ENCODE measurements at regions of chr3 and their contacts with region 1.

Region 1: DNA sequence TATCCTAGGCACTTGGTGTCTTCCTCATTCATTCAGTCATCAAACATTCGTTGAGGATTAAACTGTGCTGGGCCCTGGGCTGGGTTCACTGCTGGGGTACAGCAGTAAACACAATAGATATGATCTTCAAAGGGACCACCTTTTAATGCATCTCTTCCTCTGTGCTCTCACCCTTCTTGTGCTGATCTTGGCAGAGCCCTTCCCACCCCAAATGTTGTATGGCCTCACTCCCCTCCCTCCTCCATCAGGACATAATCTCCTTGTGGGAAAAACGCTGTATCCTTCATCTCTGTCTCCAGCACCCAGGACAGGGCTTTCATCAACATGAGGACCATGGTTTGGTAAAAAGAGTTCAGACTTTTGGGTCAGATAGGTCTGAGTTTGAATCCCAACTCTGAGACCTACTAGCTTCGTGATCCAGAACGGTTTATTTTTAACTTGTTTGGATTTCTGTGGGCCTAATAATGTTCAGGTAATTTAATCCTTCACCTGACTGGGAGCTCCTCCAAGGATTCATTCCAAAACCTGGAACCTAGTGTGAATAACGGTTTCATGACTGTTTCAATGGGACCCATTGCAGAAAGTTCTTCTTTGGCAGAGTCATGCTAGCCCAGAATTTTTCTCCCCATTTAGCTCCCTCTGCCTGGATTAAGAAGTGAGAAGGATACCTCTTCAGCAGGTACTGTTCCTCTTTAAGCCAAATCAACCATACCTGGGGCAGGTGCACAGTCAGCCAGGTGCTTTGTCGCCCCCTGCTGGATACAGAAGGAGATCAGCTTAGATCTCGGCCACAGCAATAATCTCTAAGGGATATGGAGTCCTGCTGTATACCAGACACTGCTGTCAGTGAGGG is 5.2 kb upstream of the WNT7A start:
- DNase-seq: peak; percentile 54
- H3K4me3 Mint-ChIP-seq: no peak overlapping the region
- H3K27ac Mint-ChIP-seq: no peak overlapping the region
- H3K4me1 Mint-ChIP-seq: no peaks in the 10 kb centered on the region
- H3K27me3 Mint-ChIP-seq: peaks cover 34% of the 10 kb centered on the region

Region 2: DNA sequence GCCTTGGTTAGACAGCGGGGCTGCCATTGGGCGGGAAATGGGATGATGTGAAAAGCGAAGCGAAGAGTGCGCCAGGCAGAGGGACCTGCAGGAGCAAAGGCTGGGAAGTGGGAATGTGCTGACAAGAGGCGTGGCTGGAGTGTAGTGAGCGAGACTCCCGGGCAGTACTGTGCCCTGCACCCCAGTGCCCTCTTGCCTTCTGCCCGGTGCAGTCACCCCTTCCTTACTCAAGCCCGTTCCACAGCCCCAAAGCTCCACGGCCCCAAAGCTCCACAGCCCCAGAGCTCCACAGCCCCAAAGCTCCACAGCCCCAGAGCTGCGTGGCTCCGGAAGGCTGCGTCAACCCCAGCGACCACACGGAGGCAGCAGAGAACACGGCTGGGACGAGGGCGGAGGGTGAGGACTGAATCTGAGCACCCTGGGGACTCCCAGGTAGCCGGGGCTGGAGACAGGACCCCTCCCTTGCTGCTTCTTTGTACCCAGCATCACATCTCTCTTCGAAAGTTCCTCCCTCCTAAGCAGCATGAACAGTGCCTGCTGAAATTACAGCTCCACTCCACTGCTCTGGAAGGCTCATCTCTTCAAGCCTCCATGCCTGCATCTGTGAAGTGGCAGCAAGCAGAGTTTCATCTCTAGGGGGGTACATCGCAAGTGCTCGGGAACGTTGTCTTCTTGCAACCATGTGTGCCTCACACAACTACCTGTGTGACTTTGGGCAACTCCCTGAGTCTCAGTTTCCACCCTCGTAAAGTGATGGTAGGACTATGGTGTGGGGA is 227.2 kb before region 1 on chr3:
- intact Hi-C with region 1: loop called (anchors 1 kb)
- DNase-seq: peak; percentile 50
- H3K4me3 Mint-ChIP-seq: no peak overlapping the region
- H3K27ac Mint-ChIP-seq: no peak overlapping the region
- H3K4me1 Mint-ChIP-seq: no peaks in the 10 kb centered on the region
- H3K27me3 Mint-ChIP-seq: peaks cover 32% of the 10 kb centered on the region

Region 3: DNA sequence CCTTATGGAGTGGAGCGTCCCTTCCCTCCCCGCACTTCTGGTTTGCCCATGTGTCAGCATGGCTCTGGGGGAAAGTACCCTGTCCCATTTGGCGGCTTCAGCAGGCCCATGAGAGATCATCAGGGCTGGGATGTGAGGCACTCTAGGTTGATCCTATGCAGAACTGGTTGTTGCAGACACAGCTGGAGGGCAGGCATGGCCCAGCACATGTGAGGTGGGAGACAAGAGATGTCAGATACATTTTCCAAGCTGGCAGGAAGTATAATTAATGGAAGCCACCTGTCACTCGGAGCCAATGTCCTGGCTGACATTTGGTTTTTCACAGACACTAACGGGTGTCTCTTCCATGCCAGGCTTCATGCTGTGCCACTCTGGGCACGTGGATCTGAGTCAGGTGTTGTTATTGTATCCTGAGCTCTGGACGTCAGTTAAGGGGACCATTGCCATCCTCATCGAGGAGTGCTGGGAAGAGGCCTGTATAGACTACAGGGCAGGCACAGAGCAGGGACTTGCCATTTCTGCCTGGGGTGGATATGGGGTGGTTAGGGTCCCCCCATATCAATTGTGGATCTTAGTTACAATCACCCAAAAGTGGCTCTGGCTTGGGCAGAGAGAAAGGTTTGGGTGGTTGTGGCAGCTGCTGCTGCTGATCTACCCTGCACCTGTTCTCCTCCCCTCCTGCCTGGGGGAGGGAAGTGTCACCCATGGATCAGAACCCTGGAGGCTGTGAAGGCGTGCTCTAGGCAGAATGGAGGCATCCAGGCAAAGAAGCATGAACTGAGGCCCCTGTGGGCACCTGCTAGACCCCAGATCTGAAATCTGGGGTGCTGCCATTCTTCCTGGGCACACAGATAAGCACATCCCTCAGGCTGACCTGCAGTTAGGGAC is 195.5 kb before region 1 on chr3:
- intact Hi-C with region 1: no loop called
- DNase-seq: no peak
- H3K4me3 Mint-ChIP-seq: no peak overlapping the region
- H3K27ac Mint-ChIP-seq: no peak overlapping the region
- H3K4me1 Mint-ChIP-seq: no peaks in the 10 kb centered on the region
- H3K27me3 Mint-ChIP-seq: peaks cover 1% of the 10 kb centered on the region

Region 4: DNA sequence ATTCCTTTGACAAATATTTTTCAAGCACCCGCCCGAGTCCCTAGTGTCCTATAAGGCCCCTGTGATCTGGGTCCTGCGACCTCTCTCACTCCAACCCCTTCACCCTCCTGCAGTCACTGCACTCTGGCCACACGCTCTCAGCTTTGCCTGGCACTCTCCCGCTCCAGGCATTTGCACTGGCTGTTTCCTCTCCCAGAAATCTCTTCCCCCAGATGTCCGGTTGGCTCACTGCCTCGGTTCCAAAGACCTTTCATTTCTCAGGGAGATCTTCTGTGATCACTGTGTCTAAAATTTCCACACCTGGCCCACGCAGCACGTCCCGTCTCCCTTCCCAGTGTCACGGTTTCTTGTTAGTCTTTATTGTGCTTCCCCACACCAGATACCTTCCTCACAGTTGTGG is 102.6 kb before region 1 on chr3:
- intact Hi-C with region 1: no loop called
- DNase-seq: no peak
- H3K4me3 Mint-ChIP-seq: no peak overlapping the region
- H3K27ac Mint-ChIP-seq: no peak overlapping the region
- H3K4me1 Mint-ChIP-seq: no peaks in the 10 kb centered on the region
- H3K27me3 Mint-ChIP-seq: peaks cover 2% of the 10 kb centered on the region

Region 5: DNA sequence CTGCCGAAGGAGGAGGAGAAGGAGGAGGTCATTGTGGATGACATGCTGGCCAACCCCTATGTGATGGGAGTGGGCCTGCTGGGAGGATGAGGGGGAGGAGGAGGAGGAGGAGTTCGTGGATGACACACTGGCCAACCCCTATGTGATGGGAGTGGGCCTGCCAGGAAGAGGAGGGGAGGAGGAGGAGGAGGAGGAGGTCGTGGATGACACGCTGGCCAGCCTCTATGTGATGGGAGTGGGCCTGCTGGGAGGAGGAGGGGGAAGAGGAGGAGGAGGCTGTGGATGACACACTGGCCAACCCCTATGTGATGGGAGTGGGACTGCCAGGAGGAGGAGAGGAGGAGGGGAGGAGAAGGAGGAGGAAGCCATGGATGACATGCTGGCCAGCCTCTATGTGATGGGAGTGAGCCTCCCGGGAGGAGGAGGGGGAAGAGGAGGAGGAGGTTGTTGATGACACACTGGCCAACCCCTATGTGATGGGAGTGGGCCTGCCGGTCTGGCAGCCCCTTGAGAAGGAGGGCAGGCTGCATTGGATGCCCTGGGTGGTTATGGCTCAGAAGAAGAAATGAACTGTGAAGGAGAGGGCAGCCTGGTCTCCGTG is 50.5 kb after region 1 on chr3:
- intact Hi-C with region 1: no loop called
- DNase-seq: no peak
- H3K4me3 Mint-ChIP-seq: no peak overlapping the region
- H3K27ac Mint-ChIP-seq: no peak overlapping the region
- H3K4me1 Mint-ChIP-seq: no peaks in the 10 kb centered on the region
- H3K27me3 Mint-ChIP-seq: no peaks in the 10 kb centered on the region

Region 6: DNA sequence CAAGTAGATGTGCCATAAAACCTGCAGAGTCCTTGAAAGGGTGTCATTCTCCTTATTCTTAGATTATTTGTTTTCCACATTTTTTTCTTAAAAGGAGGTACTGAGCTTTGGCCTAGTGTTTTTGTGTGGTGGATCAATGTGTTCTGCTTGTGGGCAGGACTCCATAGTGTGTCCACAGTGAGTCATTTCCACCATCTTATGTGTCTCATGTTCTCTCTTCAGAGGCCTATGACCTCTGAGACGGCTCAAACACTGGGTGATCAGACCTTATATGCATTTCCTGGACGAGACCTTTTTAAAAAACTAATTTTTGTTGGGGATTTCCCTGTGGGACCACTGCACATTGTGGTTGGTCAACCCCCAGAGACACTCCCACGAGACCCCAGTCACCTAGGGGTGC is 146.2 kb after region 1 on chr3:
- intact Hi-C with region 1: no loop called
- DNase-seq: no peak
- H3K4me3 Mint-ChIP-seq: no peak overlapping the region
- H3K27ac Mint-ChIP-seq: no peak overlapping the region
- H3K4me1 Mint-ChIP-seq: no peaks in the 10 kb centered on the region
- H3K27me3 Mint-ChIP-seq: peaks cover 9% of the 10 kb centered on the region